Heart right ventricle (tissue), 16 donors: ENCODE measurements at regions of chr14 and their contacts with region 1.

Region 1: GRCh38 chr14:53953002-53953827 is 3.4 kb downstream of the BMP4 start:
- DNase-seq: peak; percentile 87 to 88
- ATAC-seq: peak; percentile 85 to 94 (median 88)
- H3K4me3 ChIP-seq: peak overlapping the region; percentile 52 to 83 (median 74)
- H3K27ac ChIP-seq: peak overlapping the region; percentile 86 to 98 (median 91)
- H3K4me1 ChIP-seq: peaks cover 0 to 49% (median 27%) of the 10 kb centered on the region in 9 donors
- H3K27me3 ChIP-seq: peaks cover 0 to 64% (median 7%) of the 10 kb centered on the region in 7 donors
- CTCF ChIP-seq: no peak

Region 2: GRCh38 chr14:53539489-53540126 is 413.6 kb before region 1 on chr14:
- intact Hi-C with region 1: loop called in 3 of 10 experiments (anchors 5 to 10 kb)
- DNase-seq: peak; percentile 68 to 80
- ATAC-seq: peak; percentile 65 to 90 (median 86)
- H3K4me3 ChIP-seq: no peak overlapping the region
- H3K27ac ChIP-seq: peak overlapping the region in 3 of 10 donors; percentile 11 to 30 (median 26)
- H3K4me1 ChIP-seq: peaks cover 0 to 37% (median 10%) of the 10 kb centered on the region in 9 donors
- H3K27me3 ChIP-seq: no peaks in the 10 kb centered on the region
- CTCF ChIP-seq: peak; percentile 77 to 97 (median 90)

Region 3: DNA sequence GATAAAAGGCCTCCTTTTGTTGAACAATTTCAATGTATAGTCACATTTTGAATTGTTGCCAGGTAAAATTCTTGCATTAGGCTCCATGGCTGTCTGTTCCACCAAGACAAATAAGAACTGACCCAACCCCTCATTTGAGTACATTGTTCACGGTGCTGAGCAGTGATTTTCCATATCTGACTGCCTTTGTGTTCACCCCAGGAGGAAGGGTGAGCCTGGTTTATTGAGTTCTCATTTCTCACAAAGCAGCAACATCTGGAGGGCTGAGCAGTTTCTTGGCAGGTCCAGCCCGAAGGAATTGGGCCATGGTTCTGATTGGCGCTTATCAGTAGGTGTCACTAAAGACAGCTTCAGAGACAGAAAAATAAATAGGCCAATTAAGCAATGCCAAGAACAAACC is 145.7 kb before region 1 on chr14:
- intact Hi-C with region 1: loop called in 3 of 10 experiments (anchors 10 kb)
- DNase-seq: peak; percentile 20 to 26
- ATAC-seq: peak in 7 of 8 donors; percentile 67 to 91 (median 76)
- H3K4me3 ChIP-seq: no peak overlapping the region
- H3K27ac ChIP-seq: peak overlapping the region in 6 of 10 donors; percentile 1 to 51 (median 26)
- H3K4me1 ChIP-seq: peaks cover 0 to 18% (median 0%) of the 10 kb centered on the region in 9 donors
- H3K27me3 ChIP-seq: no peaks in the 10 kb centered on the region
- CTCF ChIP-seq: peak in 3 of 9 donors; percentile 8 to 36 (median 18)

Region 4: GRCh38 chr14:53875324-53875897 is 77.8 kb before region 1 on chr14:
- intact Hi-C with region 1: loop called in 2 of 10 experiments (anchors 1 to 5 kb)
- DNase-seq: no peak
- ATAC-seq: peak in 4 of 8 donors; percentile 23 to 54 (median 44)
- H3K4me3 ChIP-seq: no peak overlapping the region
- H3K27ac ChIP-seq: peak overlapping the region in 6 of 10 donors; percentile 26 to 69 (median 45)
- H3K4me1 ChIP-seq: peaks cover 0 to 61% (median 12%) of the 10 kb centered on the region in 9 donors
- H3K27me3 ChIP-seq: no peaks in the 10 kb centered on the region
- CTCF ChIP-seq: no peak

Region 5: DNA sequence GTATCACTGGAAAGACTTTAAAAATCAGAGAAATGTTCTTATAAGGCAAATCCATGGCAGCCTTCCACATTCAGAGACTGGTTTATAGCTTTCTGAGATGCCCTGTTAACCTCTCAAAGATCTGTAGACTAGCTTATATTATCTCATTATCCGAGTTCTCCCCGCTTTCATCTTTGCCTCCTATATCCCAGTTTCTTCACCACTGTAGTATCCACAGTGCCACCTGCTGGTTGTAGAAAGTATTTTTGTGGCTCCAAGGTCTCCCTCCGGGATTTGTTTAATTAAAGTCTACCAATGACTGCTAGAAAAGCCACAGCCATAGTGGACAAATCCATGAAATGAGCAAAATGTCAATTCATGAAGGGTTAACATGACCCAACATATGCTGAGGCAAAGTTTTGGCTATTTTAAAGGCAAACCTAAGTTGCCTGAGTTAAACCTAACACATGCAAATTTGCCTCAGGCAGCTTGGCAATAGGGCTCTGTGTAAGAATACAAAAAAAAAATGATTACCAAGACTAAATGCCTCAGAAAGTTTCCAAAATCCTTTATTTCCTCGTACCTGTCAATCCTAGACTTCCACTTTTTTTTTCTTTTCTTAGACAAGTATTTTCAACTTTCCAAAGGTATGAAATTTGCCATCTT is 222.2 kb after region 1 on chr14:
- intact Hi-C with region 1: loop called in 5 of 10 experiments (anchors 2 to 10 kb)
- DNase-seq: peak in 1 of 2 donors; percentile 78
- ATAC-seq: peak in 7 of 8 donors; percentile 46 to 79 (median 59)
- H3K4me3 ChIP-seq: no peak overlapping the region
- H3K27ac ChIP-seq: peak overlapping the region in 3 of 10 donors; percentile 54 to 82 (median 67)
- H3K4me1 ChIP-seq: peaks cover 5 to 52% (median 33%) of the 10 kb centered on the region in 9 donors
- H3K27me3 ChIP-seq: peaks cover 0 to 7% (median 0%) of the 10 kb centered on the region in 7 donors
- CTCF ChIP-seq: peak; percentile 59 to 89 (median 82)

Region 6: GRCh38 chr14:54347997-54348611 is 394.9 kb after region 1 on chr14:
- intact Hi-C with region 1: loop called in 1 of 10 experiments (anchors 10 kb)
- DNase-seq: peak in 1 of 2 donors; percentile 32
- ATAC-seq: peak in 6 of 8 donors; percentile 41 to 57 (median 50)
- H3K4me3 ChIP-seq: no peak overlapping the region
- H3K27ac ChIP-seq: peak overlapping the region in 4 of 10 donors; percentile 66 to 83 (median 80)
- H3K4me1 ChIP-seq: peaks cover 0 to 27% (median 21%) of the 10 kb centered on the region in 9 donors
- H3K27me3 ChIP-seq: no peaks in the 10 kb centered on the region
- CTCF ChIP-seq: peak; percentile 55 to 89 (median 75)